K562 (cell line): ENCODE measurements at regions of chr3 and their contacts with region 1.

Region 1: DNA sequence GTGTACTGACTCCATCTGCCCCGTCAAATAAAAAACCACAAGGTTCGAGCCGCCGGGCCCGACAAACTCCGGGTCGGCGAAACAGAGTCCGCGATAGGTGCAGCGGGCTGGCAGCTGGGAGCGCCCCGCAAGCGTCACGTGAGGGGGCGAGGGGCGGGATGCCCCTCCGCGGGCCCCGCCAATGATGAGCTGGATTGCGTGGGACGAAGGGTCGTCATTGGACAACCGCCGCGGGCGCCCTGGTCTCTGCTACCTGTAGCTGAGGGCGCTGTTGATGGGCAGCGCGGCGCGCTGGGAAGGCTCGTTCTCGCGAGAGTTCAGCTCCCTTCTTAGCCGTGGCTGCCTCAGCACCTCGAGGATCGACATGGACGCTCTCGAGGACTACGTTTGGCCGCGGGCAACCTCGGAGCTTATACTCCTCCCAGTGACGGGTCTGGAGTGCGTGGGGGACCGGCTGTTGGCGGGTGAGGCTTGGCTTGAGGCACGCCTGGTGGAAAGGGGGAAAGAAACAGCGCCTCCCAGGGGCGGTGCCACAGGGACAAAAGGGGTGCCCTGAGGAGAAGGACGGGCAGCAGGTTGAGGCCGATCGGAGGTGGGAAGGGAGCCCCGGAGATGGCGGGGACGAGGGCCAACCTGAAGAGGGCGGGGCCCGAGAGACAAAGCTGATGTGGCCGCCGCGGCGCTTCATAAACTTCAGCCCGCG is at the start of gene WDR6:
- DNase-seq: peak; percentile 91 to 97 (median 94)
- ATAC-seq: peak; percentile 89
- H3K4me3 ChIP-seq: peak within 1 kb of the TSS; percentile 80
- H3K27ac ChIP-seq: peak within 1 kb of the TSS; percentile 99
- H3K4me1 ChIP-seq: peaks cover 19 to 45% of the 10 kb centered on the region in 2 experiments; a peak in 4 of 5 replicates
- H3K27me3 ChIP-seq: no peaks in the 10 kb centered on the region
- CTCF ChIP-seq: peak; percentile 39 to 55 (median 42); a peak in 5 of 6 replicates
- EP300 ChIP-seq: no peak
- POLR2A ChIP-seq: peak; percentile 94
- RAD21 ChIP-seq: peak in 1 of 2 experiments; percentile 15; a peak in 1 of 4 replicates
- polyA plus RNA-seq, gene WDR6: 8.9 to 14.2 TPM

Region 2: DNA sequence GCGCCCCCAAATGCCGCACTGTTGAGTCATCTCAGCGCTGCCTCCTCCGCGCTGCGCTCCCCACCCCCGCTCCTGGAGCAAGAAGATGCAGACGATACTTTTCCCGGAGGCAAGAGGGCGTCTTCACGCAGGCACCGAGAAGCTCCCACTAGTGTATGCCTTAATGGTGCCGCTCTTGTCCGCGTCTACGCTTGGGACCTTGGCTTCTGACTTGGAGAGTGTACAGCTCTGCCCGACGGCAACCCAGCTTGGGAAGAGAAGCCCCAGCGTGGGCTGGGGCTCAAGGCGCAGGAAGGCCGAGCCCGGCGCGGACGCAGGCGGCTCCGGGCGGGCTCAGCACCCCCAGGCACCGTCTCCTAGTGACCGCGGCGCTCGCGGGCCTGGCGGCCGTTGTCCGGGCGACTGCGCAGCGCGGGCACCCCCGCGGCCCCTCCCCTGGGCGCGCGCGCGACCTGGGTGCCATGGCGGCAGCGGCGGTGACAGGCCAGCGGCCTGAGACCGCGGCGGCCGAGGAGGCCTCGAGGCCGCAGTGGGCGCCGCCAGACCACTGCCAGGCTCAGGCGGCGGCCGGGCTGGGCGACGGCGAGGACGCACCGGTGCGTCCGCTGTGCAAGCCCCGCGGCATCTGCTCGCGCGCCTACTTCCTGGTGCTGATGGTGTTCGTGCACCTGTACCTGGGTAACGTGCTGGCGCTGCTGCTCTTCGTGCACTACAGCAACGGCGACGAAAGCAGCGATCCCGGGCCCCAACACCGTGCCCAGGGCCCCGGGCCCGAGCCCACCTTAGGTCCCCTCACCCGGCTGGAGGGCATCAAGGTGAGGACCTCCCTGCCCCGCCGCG is 17.2 kb before region 1 on chr3 and contains the start of gene P4HTM:
- CTCF ChIA-PET with region 1: no interaction called
- POLR2A ChIA-PET with region 1: interaction called, 6 read pairs
- in situ Hi-C with region 1: no loop called
- intact Hi-C with region 1: loop called (anchors 2 kb)
- DNase-seq: peak; percentile 78 to 88 (median 85)
- ATAC-seq: peak; percentile 93
- H3K4me3 ChIP-seq: peak within 1 kb of the TSS; percentile 41
- H3K27ac ChIP-seq: peak within 1 kb of the TSS; percentile 78
- H3K4me1 ChIP-seq: peaks cover 9 to 21% of the 10 kb centered on the region in 2 experiments
- H3K27me3 ChIP-seq: no peaks in the 10 kb centered on the region
- CTCF ChIP-seq: peak; percentile 58 to 74 (median 64)
- EP300 ChIP-seq: peak; percentile 49; the same call in 1 of the 2 replicates
- POLR2A ChIP-seq: no peak
- RAD21 ChIP-seq: peak in 1 of 2 experiments; percentile 21; a peak in 1 of 4 replicates
- polyA plus RNA-seq, gene P4HTM: not detected

Region 3: GRCh38 chr3:49021813-49022687 is 14.8 kb after region 1 on chr3 and contains the start of gene NDUFAF3:
- CTCF ChIA-PET with region 1: no interaction called
- POLR2A ChIA-PET with region 1: interaction called, 104 read pairs
- in situ Hi-C with region 1: no loop called
- intact Hi-C with region 1: no loop called
- DNase-seq: peak; percentile 74 to 91 (median 77)
- ATAC-seq: peak; percentile 76
- H3K4me3 ChIP-seq: peak within 1 kb of the TSS; percentile 74
- H3K27ac ChIP-seq: peak within 1 kb of the TSS; percentile 99
- H3K4me1 ChIP-seq: peaks cover 14 to 67% of the 10 kb centered on the region in 2 experiments; a peak in 4 of 5 replicates
- H3K27me3 ChIP-seq: no peaks in the 10 kb centered on the region
- CTCF ChIP-seq: peak; percentile 79 to 83 (median 82)
- EP300 ChIP-seq: no peak
- POLR2A ChIP-seq: no peak; the same call in none of the 2 replicates
- RAD21 ChIP-seq: no peak
- polyA plus RNA-seq, gene NDUFAF3: 17.0 to 36.3 TPM

Region 4: DNA sequence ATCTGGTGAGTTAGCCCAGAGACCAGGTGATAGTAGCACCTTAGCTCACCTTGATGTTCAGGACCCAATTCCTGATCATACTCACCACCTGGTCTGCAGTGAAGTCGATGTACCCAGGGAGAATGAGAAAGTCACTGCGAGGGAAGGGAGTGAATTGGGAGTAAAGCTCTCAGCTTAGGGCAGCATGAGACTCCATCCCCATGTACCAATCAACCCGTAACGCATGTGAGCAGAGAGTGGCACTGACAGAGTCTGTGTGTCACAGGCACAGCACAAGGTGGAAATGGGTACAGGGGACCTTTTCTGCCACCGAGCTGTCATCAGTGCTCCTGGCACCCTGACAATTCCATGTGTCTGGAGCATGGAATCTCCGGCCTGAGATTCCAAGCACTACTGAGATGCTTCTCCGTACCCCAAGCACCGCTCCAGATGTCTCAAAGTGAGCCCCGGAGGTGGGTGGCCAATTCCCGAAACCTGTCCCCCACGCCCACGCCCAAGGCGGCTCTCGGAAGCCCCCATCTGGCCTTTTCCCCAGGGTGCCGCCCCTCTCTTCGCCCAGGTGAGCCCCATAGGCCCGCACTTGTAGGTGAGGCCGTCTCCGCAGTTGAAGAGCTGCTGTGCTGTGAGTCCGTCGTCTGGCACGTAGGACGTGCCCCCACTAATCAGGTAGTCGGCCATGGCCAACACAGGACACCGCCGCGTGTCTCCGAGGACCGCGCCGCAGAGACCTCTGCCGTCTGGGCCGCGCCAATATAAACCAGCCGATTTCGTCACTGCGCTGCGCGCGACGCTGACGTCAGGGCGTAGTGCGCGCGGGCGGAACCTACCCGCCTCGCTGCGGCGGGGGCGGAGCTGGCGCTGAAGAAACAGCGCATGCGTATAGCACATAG is 21.7 kb after region 1 on chr3 and contains the start of gene IMPDH2:
- CTCF ChIA-PET with region 1: no interaction called
- POLR2A ChIA-PET with region 1: interaction called, 104 read pairs
- in situ Hi-C with region 1: no loop called
- intact Hi-C with region 1: no loop called
- DNase-seq: peak; percentile 78 to 95 (median 86)
- ATAC-seq: peak; percentile 86
- H3K4me3 ChIP-seq: peak within 1 kb of the TSS; percentile 74
- H3K27ac ChIP-seq: peak within 1 kb of the TSS; percentile 89
- H3K4me1 ChIP-seq: peaks cover 37 to 42% of the 10 kb centered on the region in 2 experiments; a peak in 4 of 5 replicates
- H3K27me3 ChIP-seq: no peaks in the 10 kb centered on the region
- CTCF ChIP-seq: peak in 1 of 3 experiments; percentile 28; a peak in 2 of 6 replicates
- EP300 ChIP-seq: no peak
- POLR2A ChIP-seq: peak; percentile 98
- RAD21 ChIP-seq: 0 out of 4 replicates have a peak, but pooled peaks of 1 of the 2 experiments have one; percentile 2
- polyA plus RNA-seq, gene IMPDH2: 426 to 507 TPM

Region 5: DNA sequence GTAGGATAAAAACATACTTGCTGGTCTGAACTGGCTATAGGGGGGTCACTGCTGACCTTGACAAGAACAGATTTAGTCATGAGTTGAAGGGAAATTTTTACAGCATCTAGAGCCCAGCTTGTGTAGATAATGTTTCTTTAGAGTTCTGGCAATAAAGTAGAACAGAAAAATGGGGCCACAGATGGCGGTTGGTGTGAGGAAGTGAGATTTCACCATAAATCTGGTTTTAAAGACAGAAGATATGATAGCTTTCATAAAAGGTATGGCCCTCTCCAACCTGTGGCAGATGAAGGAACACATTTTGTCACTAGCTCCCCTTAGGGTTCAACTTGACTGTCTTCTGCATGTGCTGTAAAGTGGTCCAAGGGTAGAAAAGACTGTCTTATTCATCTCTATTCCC is 46.3 kb after region 1 on chr3:
- CTCF ChIA-PET with region 1: no interaction called
- POLR2A ChIA-PET with region 1: no interaction called
- in situ Hi-C with region 1: no loop called
- intact Hi-C with region 1: no loop called
- DNase-seq: no peak
- ATAC-seq: no peak
- H3K4me3 ChIP-seq: no peak overlapping the region
- H3K27ac ChIP-seq: no peak overlapping the region
- H3K4me1 ChIP-seq: no peaks in the 10 kb centered on the region; a peak in 1 of 5 replicates
- H3K27me3 ChIP-seq: no peaks in the 10 kb centered on the region
- CTCF ChIP-seq: no peak
- EP300 ChIP-seq: no peak
- POLR2A ChIP-seq: no peak
- RAD21 ChIP-seq: no peak

Region 6: DNA sequence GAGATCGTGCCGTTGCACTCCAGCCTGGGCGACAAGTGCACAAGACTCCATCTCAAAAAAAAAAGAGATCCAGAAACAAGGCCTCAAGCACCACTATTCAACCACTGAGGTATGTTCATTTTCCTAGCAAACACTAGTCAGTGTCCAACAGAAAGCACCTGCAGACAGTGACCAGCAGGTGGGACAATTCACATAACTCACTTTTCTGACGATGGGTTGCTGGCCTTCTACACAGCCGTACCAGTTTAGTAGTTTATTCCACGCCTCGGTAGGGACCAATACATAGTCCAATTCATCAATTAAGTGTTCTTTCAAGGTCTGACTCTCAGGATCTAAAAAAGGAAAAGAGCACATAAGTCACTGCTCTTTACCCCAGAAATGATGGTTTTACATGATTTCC is 320.3 kb after region 1 on chr3:
- CTCF ChIA-PET with region 1: no interaction called
- POLR2A ChIA-PET with region 1: no interaction called
- in situ Hi-C with region 1: no loop called
- intact Hi-C with region 1: no loop called
- DNase-seq: peak in 1 of 4 experiments; percentile 14
- ATAC-seq: 0 out of 3 replicates have a peak, but pooled peaks have one; percentile 34
- H3K4me3 ChIP-seq: no peak overlapping the region
- H3K27ac ChIP-seq: no peak overlapping the region
- H3K4me1 ChIP-seq: no peaks in the 10 kb centered on the region
- H3K27me3 ChIP-seq: no peaks in the 10 kb centered on the region
- CTCF ChIP-seq: peak in 2 of 3 experiments; percentile 11 to 23; a peak in 2 of 6 replicates
- EP300 ChIP-seq: no peak
- POLR2A ChIP-seq: no peak
- RAD21 ChIP-seq: no peak

Region 7: DNA sequence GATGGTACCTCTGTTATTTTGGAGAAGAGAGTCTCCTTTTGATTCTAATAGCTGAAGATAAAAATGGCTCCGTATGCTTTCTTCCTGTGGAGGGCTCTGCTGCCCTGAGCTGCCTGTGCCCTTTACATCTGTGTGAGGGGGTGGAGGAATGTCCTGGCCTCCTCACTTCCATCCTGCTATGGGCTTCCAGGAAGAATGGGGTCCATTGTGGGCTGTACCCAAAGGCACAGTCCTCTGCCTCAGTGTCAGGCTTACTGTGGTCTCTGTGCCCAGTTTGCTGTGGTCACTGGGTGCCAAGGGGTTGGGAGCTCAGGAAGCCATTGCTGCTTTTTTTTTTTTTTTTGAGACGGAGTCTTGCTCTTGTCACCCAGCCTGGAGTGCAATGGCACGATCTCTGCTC is 477.3 kb after region 1 on chr3:
- CTCF ChIA-PET with region 1: no interaction called
- POLR2A ChIA-PET with region 1: no interaction called
- in situ Hi-C with region 1: no loop called
- intact Hi-C with region 1: no loop called
- DNase-seq: no peak
- ATAC-seq: no peak
- H3K4me3 ChIP-seq: no peak overlapping the region
- H3K27ac ChIP-seq: no peak overlapping the region
- H3K4me1 ChIP-seq: no peaks in the 10 kb centered on the region
- H3K27me3 ChIP-seq: no peaks in the 10 kb centered on the region
- CTCF ChIP-seq: no peak
- EP300 ChIP-seq: no peak
- POLR2A ChIP-seq: no peak
- RAD21 ChIP-seq: no peak